Vagina (tissue), 2 donors: ENCODE measurements at regions of chr15 and their contacts with region 1.

Region 1: DNA sequence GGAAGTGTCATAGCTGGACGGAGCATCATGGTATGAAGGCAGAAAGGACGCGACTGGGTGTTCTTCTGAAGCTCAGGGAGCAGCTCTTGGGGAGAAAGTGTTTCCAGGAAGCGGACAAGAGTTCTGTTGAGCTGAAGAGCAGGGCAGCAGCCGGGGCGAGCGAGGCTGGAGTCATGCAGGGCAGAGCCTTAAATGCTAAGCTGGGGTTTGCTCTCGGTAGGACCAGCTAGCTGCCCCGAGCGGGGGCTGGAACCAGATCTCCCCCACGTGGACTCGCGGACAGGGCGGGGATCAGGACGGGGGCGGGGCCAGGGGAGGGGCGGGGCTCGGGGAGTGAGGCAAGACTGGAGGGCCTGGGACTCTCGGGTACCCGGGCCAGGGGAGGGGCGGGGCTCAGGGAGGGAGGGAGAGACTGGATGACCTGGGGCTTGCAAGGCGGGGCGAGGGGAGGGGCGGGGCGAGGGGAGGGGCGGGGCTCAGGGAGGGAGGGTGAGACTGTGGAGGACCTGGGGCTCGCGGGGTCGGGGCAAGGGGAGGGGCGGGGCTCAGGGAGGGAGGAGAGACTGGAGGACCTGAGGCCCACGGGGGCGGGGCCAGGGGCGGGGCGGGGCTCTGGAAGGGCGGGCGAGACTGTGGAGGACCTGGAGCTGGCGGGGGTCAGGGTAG is 486 bp upstream of the FAH start:
- DNase-seq: peak; percentile 98 to 99
- H3K4me3 ChIP-seq: peak overlapping the region; percentile 72 to 91
- H3K27ac ChIP-seq: peak overlapping the region; percentile 87
- H3K4me1 ChIP-seq: peaks cover 24% of the 10 kb centered on the region
- H3K27me3 ChIP-seq: no peaks in the 10 kb centered on the region
- CTCF ChIP-seq: no peak
- POLR2A ChIP-seq: no peak

Region 2: DNA sequence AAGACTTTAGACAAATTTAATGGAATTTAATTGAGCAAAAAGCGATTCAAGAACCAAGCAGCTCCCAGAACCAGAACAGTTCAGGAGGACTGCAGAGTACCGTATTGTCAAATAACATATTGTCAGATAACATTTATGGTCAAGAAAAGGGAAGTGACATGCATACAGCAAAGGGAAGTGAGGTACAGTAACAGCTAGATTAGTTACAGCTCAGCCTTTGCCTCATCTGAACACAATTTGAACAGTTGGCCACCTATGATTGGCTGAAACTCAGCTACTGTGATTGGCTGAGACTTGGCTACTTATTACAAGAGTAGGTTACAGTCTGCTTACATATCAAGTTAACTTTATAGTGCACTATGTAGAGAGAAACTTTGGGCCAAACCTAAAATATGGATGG is 70.9 kb before region 1 on chr15:
- intact Hi-C with region 1: loop called (anchors 10 kb)
- DNase-seq: no peak
- H3K4me3 ChIP-seq: no peak overlapping the region
- H3K27ac ChIP-seq: no peak overlapping the region
- H3K4me1 ChIP-seq: no peaks in the 10 kb centered on the region
- H3K27me3 ChIP-seq: no peaks in the 10 kb centered on the region
- CTCF ChIP-seq: no peak
- POLR2A ChIP-seq: no peak

Region 3: DNA sequence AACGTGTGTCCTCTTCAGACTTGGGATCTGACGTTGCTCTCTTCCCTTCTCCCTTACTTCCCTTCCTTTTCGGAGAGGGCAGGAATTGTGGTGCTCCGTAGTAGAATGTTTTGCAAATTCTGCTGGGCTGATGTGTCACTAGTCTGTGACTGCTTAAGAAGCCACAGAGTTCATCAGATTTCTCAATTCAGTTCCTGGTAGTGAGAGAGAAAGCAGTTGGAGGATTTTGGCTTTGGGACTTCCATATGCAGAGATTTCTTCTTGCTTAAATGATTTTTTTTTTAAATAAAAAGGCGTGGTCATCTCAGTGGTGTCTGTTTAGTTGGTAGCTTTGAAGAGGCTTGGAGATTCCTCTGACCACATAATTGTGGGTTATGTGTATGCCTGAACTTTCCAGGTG is 637.0 kb after region 1 on chr15:
- intact Hi-C with region 1: no loop called
- DNase-seq: no peak
- H3K4me3 ChIP-seq: no peak overlapping the region
- H3K27ac ChIP-seq: no peak overlapping the region
- H3K4me1 ChIP-seq: no peaks in the 10 kb centered on the region
- H3K27me3 ChIP-seq: no peaks in the 10 kb centered on the region
- CTCF ChIP-seq: no peak
- POLR2A ChIP-seq: no peak